ENCODE measurements at regions of chr9 and their contacts with region 1.

Region 1: DNA sequence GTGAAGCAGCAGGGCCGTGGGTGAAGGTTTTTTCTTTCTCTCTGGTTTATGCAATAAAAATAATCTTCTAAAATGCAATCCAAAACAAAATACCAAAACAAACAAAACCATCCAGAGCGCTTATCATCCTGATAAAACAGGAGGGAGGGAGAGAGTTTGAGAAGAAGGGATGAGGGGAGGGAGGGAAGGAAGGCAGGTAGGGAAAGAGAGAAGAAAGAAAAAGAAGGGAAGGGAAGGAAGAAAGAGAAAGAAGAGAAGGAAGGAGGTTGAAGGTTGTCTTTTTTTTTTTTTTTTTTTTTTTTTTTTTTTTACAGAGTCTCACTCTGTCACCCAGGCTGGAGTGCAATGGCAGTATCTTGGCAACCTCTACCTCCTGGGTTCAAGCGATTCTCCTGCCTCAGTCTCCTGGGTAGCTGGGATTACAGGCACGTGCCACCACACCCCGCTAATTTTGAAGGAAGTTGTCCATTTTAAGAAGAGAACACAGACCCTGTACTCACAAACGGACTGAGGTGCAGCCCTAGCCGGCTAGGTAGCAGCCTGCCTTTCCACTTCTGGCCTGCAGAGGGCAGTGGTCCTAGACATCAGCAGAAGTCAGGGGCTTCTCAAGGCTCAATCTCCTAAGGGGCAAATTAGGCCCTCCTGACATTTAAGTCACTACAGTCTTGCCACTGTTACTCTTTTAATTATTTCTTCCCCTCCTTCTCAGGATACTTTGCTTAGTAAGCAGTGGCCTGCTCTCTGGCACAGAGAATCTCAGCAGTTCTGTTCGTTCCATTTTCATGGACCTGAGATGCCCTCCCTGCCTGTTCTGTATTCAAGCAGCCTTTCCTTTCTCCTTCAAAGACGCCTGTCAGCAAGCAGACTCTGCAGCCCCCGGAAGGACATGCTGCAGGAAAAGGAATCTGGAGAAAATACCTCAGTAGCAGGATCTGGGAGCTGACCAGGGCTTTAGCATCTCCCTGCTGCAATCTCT is 76.4 kb downstream of the EPB41L4B start:
- DNase-seq: peak; percentile 77
- H3K4me3 Mint-ChIP-seq: no peak overlapping the region
- H3K27ac Mint-ChIP-seq: no peak overlapping the region
- H3K4me1 Mint-ChIP-seq: peaks cover 2% of the 10 kb centered on the region
- H3K27me3 Mint-ChIP-seq: peaks cover 22% of the 10 kb centered on the region

Region 2: DNA sequence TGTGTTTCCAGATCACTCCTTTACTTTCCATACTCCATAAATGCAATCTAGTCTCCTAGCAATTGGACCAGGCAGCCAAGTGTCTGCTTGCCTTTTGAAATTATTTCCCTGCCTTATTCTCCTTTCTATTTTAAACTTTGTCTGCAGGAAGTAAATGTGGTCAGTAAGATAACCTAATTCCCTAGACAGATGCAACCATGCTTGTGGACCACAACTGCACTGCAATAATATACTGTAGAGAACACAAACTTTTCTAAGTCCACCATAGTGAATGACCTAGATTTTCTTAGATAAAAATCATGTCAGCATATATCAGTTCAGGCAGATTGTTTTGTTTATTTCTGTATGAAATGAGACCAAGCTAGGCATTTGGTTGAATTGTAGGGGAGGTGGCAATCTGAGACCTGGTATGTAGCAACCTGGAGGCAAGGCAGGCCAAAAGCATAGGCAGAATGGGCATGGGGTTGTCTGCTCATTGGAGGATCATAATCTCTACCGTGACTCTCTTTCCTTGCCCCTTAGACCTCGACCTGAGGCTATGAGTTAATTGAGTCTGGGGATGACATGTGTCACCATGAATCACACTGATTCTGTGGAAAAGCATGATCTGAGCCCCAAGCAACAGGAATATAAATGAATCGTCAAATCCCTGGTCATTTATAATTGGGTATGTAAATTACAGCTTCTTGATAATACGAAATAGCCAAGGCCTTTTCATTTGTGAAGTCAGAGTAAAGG is 409.3 kb before region 1 on chr9:
- CTCF ChIA-PET with region 1: no interaction called
- POLR2A ChIA-PET with region 1: no interaction called
- intact Hi-C with region 1: no loop called
- DNase-seq: no peak
- H3K4me3 Mint-ChIP-seq: no peak overlapping the region
- H3K27ac Mint-ChIP-seq: no peak overlapping the region
- H3K4me1 Mint-ChIP-seq: peaks cover 9% of the 10 kb centered on the region
- H3K27me3 Mint-ChIP-seq: peaks cover 6% of the 10 kb centered on the region

Region 3: DNA sequence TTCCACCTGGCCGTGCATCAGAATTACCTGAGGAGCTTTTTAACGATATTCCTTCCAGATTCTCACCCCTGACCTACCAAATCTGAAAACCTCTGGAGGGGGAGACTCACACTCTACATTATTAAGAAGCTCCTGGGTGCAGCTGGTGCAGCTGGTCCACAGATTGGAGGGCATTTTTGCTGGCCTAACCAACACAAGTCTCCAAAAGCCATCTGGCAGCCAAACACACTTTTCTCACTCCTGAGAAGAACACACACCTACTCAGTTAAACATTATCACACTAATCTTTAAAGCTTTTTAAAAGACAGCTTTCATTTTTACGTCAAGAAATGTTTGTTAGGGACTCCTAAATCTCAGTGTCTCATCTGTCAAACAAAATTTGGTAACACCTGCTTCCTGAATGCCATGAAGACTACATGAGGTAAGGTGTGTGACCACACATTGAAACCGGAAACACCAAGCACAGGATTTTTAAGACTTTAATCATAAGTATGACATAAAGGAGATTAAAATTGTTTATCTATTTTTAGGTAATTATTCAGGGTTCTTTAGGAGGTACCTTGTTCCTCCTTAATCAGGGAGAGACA is 267.8 kb after region 1 on chr9:
- CTCF ChIA-PET with region 1: no interaction called
- POLR2A ChIA-PET with region 1: no interaction called
- intact Hi-C with region 1: loop called (anchors 5 kb)
- DNase-seq: no peak
- H3K4me3 Mint-ChIP-seq: no peak overlapping the region
- H3K27ac Mint-ChIP-seq: no peak overlapping the region
- H3K4me1 Mint-ChIP-seq: no peaks in the 10 kb centered on the region
- H3K27me3 Mint-ChIP-seq: peaks cover 11% of the 10 kb centered on the region

Measured in activated CD4-positive, alpha-beta memory T cell treated with anti-CD3 and anti-CD28 coated beads for 36 hours (primary cell).